HepG2 (cell line): ENCODE measurements at regions of chr6 and their contacts with region 1.

Region 1: DNA sequence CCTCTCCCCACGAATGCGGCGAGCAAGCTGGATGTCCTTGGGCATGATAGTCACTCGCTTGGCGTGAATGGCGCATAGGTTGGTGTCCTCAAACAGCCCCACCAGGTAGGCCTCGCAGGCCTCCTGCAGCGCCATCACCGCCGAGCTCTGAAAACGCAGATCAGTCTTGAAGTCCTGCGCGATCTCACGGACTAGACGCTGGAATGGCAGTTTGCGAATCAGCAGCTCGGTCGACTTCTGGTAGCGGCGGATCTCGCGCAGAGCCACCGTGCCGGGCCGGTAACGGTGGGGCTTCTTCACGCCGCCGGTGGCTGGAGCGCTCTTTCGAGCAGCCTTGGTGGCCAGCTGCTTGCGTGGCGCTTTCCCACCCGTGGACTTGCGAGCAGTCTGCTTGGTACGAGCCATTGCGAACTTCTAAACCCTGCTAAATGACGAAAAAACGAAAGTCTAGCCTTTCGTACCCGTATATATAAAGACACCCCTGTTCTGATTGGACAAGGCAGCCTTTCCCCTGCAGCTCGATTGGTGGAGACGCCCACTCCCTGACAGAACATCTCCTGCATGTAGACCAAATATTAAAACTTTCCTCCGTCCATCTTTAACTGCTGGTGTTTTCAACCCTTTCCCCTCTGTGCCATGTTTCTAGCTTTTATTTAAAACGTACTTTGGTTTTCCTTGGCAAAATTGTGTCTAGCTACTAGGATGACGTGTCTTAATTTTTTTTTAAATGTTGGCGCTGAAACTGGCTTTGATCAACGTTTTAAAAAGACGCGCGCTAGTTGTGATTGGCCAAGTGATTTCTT is 109.8 kb downstream of the HFE start:
- DNase-seq: peak; percentile 93
- ATAC-seq: peak; percentile 66
- H3K4me3 ChIP-seq: peak overlapping the region; percentile 81 to 90 (median 87)
- H3K27ac ChIP-seq: peak overlapping the region; percentile 94
- H3K4me1 ChIP-seq: peaks cover 30% of the 10 kb centered on the region
- H3K27me3 ChIP-seq: no peaks in the 10 kb centered on the region; a peak in 1 of 5 replicates
- CTCF ChIP-seq: peak; percentile 60
- EP300 ChIP-seq: peak; percentile 34 to 41; a peak in 2 of 4 replicates
- POLR2A ChIP-seq: peak; percentile 99
- RAD21 ChIP-seq: peak; percentile 53

Region 2: DNA sequence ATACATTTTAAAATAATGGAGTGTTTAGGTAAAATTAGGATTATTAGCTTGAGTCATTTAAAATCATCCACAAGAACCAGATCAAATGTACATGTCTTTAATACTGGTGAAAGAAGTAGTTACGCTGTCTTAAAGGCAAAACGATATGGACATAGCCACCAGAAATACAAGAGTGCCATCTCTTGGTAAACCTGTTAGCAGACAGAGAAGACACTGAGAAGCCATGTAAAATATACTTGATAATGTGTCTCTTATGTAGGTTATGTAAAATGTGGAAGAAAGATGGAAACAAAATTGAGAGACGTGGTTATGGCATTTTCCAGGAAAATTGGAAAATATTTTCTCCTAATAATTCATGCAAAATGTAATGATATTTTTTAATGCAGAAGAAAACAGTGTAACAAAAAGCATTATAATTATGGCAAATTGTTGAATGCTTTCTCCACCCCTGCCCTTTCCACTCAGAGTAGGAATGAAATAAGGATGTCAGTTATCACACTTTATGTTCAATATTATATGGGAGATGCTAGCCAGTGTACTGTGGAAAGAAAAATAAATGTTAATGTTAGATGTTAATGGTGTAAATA is 254.4 kb before region 1 on chr6:
- CTCF ChIA-PET with region 1: no interaction called
- POLR2A ChIA-PET with region 1: no interaction called
- in situ Hi-C with region 1: no loop called
- intact Hi-C with region 1: no loop called
- DNase-seq: peak; percentile 76
- ATAC-seq: peak; percentile 93
- H3K4me3 ChIP-seq: no peak overlapping the region
- H3K27ac ChIP-seq: no peak overlapping the region
- H3K4me1 ChIP-seq: peaks cover 34% of the 10 kb centered on the region
- H3K27me3 ChIP-seq: no peaks in the 10 kb centered on the region
- CTCF ChIP-seq: peak; percentile 92
- EP300 ChIP-seq: no peak; a peak in 1 of 4 replicates
- POLR2A ChIP-seq: no peak
- RAD21 ChIP-seq: peak; percentile 89

Region 3: DNA sequence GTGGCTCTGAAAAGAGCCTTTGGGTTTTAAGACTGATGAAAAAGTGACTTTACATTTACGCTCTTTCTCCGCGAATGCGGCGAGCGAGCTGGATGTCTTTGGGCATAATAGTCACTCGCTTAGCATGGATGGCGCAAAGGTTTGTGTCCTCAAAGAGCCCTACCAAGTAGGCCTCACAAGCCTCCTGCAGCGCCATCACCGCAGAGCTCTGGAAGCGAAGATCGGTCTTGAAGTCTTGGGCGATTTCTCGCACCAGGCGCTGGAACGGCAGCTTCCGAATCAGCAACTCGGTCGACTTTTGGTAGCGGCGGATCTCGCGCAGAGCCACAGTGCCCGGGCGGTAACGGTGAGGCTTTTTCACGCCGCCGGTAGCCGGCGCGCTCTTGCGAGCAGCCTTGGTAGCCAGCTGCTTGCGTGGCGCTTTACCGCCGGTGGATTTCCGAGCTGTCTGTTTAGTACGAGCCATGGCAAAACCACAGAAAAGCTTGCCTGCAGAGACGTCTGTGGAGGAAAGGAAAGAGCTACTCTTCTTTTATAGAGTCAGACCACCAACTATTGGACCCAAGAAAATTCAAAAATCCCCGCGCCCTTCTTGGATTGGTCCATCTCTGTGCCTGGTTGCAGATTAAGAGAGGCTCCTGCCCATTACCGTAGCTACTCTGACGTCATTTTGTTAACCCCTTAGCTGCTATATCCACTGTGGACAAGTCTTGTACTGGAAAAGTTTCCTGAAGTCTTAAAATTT is 165.3 kb before region 1 on chr6:
- CTCF ChIA-PET with region 1: no interaction called
- POLR2A ChIA-PET with region 1: interaction called, 50 read pairs
- in situ Hi-C with region 1: no loop called
- intact Hi-C with region 1: loop called (anchors 2 kb)
- DNase-seq: peak; percentile 100
- ATAC-seq: peak; percentile 79
- H3K4me3 ChIP-seq: peak overlapping the region; percentile 71 to 83 (median 82)
- H3K27ac ChIP-seq: peak overlapping the region; percentile 93
- H3K4me1 ChIP-seq: peaks cover 37% of the 10 kb centered on the region
- H3K27me3 ChIP-seq: no peaks in the 10 kb centered on the region; a peak in 1 of 5 replicates
- CTCF ChIP-seq: peak; percentile 52
- EP300 ChIP-seq: peak; percentile 40 to 80; a peak in 2 of 4 replicates
- POLR2A ChIP-seq: peak; percentile 99
- RAD21 ChIP-seq: peak; percentile 61

Region 4: DNA sequence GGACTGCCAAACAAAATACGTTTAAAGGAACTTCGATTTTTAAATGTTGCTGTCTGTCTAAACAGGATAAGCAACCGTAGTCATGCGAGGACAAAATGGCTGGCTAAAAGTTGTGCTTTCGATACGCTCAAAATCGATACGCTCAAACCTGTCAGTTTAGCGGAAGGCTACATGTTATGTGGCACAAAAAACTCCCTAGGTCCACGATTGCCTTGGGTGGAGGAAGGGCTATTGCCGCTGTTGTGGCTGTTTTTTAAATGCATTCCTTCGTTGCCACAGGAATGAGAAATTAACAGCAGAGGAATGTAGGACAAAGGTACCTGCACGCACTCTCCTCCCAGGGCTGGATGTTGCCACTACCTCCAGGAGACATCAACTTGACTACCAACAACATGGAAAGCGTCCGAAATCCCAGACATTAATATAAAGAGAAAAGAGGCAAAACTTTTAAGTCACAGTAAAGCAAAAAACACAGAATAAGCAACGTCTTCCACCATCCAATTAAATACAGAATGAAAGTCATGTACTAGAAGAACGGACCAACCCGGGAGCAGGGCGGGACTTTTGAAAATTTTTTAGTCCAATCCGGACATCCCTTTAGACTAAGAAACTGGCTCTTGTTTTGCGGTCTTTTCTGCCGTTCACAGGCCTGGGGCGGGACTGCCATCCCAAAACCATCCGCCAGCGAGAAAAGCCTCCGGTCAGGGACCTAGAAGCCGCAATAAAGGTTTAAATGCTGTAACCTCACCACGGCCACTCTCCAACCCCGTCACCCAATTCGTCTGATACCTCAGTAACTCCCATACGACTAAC is 142.0 kb before region 1 on chr6:
- CTCF ChIA-PET with region 1: no interaction called
- POLR2A ChIA-PET with region 1: interaction called, 10 read pairs
- in situ Hi-C with region 1: no loop called
- intact Hi-C with region 1: no loop called
- DNase-seq: peak; percentile 97
- ATAC-seq: peak; percentile 82
- H3K4me3 ChIP-seq: peak overlapping the region; percentile 69 to 85 (median 85)
- H3K27ac ChIP-seq: peak overlapping the region; percentile 90
- H3K4me1 ChIP-seq: peaks cover 26% of the 10 kb centered on the region
- H3K27me3 ChIP-seq: no peaks in the 10 kb centered on the region; a peak in 1 of 5 replicates
- CTCF ChIP-seq: peak; percentile 32; the same call in 1 of the 2 replicates
- EP300 ChIP-seq: peak in 1 of 2 experiments; percentile 27; a peak in 1 of 4 replicates
- POLR2A ChIP-seq: peak; percentile 79 to 98; a peak in 3 of 4 replicates
- RAD21 ChIP-seq: peak; percentile 50

Region 5: DNA sequence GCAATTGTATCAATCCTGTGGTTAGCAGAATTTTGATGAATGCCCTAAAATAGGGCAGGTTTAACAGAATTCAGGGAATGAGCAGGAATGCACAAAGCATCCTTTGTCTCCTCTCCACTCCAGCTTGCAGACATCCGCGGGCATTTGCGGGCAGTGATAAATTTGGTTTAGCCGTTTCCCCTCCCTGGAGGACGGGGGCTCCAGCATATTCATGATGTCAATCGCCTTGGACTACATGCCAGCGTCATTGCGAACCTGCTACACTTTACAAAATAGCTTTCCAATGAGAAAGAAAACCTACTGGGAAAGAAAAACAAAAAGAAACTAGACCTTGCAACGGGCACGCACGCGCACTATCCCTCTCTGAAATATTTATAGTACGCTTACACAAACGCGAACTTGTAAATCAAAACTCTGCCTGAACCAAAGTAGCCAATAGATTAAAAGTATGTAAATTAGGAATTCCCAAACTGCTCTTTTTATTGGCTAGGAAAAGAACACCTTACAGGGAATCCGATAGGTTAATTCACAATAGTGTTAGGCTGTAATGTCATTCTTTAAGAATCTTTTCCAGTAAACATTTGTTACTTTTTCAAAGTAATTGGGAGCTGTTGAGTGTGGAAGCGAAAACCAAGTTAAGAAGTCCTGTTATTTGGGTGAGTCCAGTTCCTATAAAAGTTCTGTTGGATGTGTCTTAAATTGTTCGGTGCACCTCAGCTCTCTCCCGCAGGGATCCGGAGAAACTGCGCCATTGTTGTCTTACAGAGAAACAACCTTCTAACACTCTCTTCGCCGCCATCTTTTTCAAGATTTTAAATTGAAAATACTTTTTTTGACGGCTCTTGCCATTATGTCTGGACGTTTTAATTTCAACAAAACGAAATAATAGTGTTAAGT is 26.9 kb after region 1 on chr6:
- CTCF ChIA-PET with region 1: no interaction called
- POLR2A ChIA-PET with region 1: interaction called, 10 read pairs
- in situ Hi-C with region 1: no loop called
- intact Hi-C with region 1: no loop called
- DNase-seq: peak; percentile 92
- ATAC-seq: peak; percentile 93
- H3K4me3 ChIP-seq: peak overlapping the region; percentile 49 to 70 (median 69)
- H3K27ac ChIP-seq: peak overlapping the region; percentile 94
- H3K4me1 ChIP-seq: peaks cover 33% of the 10 kb centered on the region
- H3K27me3 ChIP-seq: no peaks in the 10 kb centered on the region; a peak in 1 of 5 replicates
- CTCF ChIP-seq: no peak
- EP300 ChIP-seq: no peak
- POLR2A ChIP-seq: peak; percentile 50 to 56; a peak in 2 of 4 replicates
- RAD21 ChIP-seq: no peak

Region 6: GRCh38 chr6:26537846-26538571 is 341.0 kb after region 1 on chr6 and contains the start of gene HMGN4:
- CTCF ChIA-PET with region 1: no interaction called
- POLR2A ChIA-PET with region 1: no interaction called
- in situ Hi-C with region 1: no loop called
- intact Hi-C with region 1: loop called (anchors 1 kb)
- DNase-seq: peak; percentile 92
- ATAC-seq: peak; percentile 85
- H3K4me3 ChIP-seq: peak within 1 kb of the TSS; percentile 83 to 89 (median 83)
- H3K27ac ChIP-seq: peak within 1 kb of the TSS; percentile 74
- H3K4me1 ChIP-seq: peaks cover 39% of the 10 kb centered on the region
- H3K27me3 ChIP-seq: no peaks in the 10 kb centered on the region
- CTCF ChIP-seq: peak; percentile 48
- EP300 ChIP-seq: no peak
- POLR2A ChIP-seq: peak; percentile 54 to 83; a peak in 3 of 4 replicates
- RAD21 ChIP-seq: peak; percentile 32; the same call in 1 of the 2 replicates
- total RNA-seq, gene HMGN4: 52.1 and 79.1 TPM in 2 replicates

Region 7: GRCh38 chr6:26754212-26754611 is 557.2 kb after region 1 on chr6:
- CTCF ChIA-PET with region 1: no interaction called
- POLR2A ChIA-PET with region 1: no interaction called
- in situ Hi-C with region 1: no loop called
- intact Hi-C with region 1: no loop called
- DNase-seq: no peak
- ATAC-seq: peak; percentile 44; the same call in 2 of the 3 replicates
- H3K4me3 ChIP-seq: peak overlapping the region in 1 of 3 experiments; percentile 48; a peak in 1 of 6 replicates
- H3K27ac ChIP-seq: no peak overlapping the region
- H3K4me1 ChIP-seq: peaks cover 14% of the 10 kb centered on the region
- H3K27me3 ChIP-seq: peaks cover 1 to 14% of the 10 kb centered on the region in 2 experiments; a peak in 2 of 5 replicates
- CTCF ChIP-seq: no peak
- EP300 ChIP-seq: no peak
- POLR2A ChIP-seq: no peak
- RAD21 ChIP-seq: no peak